Transverse colon (tissue), 4 donors: ENCODE measurements at regions of chr16 and their contacts with region 1.

Region 1: GRCh38 chr16:88194397-88195268 is 188.1 kb upstream of the ZNF469 start:
- DNase-seq: peak; percentile 36
- H3K4me3 ChIP-seq: no peak overlapping the region
- H3K27ac ChIP-seq: peak overlapping the region in 2 of 4 donors; percentile 21 to 25
- H3K4me1 ChIP-seq: peaks cover 0 to 5% (median 0%) of the 10 kb centered on the region in 4 donors
- H3K27me3 ChIP-seq: peaks cover 13% of the 10 kb centered on the region
- CTCF ChIP-seq: peak in 1 of 5 experiments; percentile 3
- EP300 ChIP-seq: no peak
- POLR2A ChIP-seq: no peak

Region 2: GRCh38 chr16:88437373-88437964 is 242.8 kb after region 1 on chr16:
- in situ Hi-C with region 1: no loop called
- intact Hi-C with region 1: loop called (anchors 10 kb)
- DNase-seq: peak; percentile 63
- H3K4me3 ChIP-seq: no peak overlapping the region
- H3K27ac ChIP-seq: no peak overlapping the region
- H3K4me1 ChIP-seq: peaks cover 0 to 4% (median 1%) of the 10 kb centered on the region in 4 donors
- H3K27me3 ChIP-seq: peaks cover 36% of the 10 kb centered on the region
- CTCF ChIP-seq: peak; percentile 76 to 93 (median 91)
- EP300 ChIP-seq: no peak
- POLR2A ChIP-seq: no peak